ENCODE measurements at regions of chr20 and their contacts with region 1.

Region 1: DNA sequence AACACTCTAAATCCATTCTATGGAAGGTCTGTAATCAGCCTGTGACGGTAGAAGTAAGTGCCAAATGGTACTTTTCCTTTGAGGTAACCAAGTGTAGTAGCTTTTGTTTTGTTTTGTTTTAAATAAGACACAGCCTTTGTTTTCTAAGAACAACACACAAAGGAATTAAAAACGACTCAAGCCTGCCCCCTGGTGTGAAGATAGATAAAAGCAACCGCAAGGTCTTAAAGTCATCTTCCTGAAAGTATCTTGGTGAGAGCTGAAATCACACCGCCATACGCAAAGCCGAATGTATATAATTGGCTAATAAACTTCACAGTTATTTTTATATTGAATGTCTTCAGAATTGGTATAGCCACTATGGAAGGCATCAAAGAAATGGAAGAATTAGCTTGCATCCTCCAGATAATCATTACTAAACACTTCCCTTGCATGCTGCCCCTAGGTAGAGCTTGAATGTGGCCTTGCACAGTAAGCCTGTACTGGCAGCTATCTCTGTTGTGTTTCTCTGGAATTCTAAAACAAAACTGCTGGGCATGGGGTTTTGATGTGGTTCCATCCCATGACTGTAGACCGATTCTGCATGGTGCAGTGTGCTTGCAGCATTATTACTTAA is 95.6 kb downstream of the LAMP5 start:
- DNase-seq: peak; percentile 29
- H3K4me3 ChIP-seq: no peak overlapping the region
- CTCF ChIP-seq: peak; percentile 42

Region 2: GRCh38 chr20:9400171-9401025 is 209.6 kb before region 1 on chr20:
- CTCF ChIA-PET with region 1: interaction called, 478 read pairs
- POLR2A ChIA-PET with region 1: no interaction called
- DNase-seq: no peak
- H3K4me3 ChIP-seq: no peak overlapping the region
- CTCF ChIP-seq: no peak

Region 3: GRCh38 chr20:9417665-9418064 is 192.3 kb before region 1 on chr20:
- CTCF ChIA-PET with region 1: interaction called, 10 read pairs
- POLR2A ChIA-PET with region 1: no interaction called
- DNase-seq: no peak
- H3K4me3 ChIP-seq: no peak overlapping the region
- CTCF ChIP-seq: no peak

Region 4: DNA sequence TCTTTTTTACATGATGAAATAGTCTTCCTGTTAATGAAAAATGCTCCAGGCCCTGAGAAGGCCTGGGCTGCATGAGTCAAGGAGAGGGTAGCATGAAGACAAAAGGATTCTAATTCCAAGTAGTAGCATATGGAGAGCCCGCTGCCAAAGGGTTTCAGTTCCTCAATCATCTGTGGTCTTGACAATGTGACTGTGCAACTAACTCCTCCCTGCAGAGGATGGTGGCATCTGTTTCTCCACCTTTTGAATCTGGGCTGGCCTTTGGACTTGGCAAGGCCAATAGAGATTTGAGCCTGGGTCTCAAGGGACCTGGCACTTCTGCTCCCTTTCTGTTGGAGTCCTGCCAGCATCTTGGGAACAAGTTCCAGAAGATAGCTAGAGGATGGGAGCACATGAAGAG is 389.6 kb after region 1 on chr20:
- CTCF ChIA-PET with region 1: no interaction called
- POLR2A ChIA-PET with region 1: no interaction called
- DNase-seq: no peak
- H3K4me3 ChIP-seq: no peak overlapping the region
- CTCF ChIP-seq: no peak

Measured in AG04449 (cell line).